ENCODE measurements at regions of chr6 and their contacts with region 1.

Region 1: GRCh38 chr6:26183581-26184366 is 96.5 kb downstream of the HFE start:
- DNase-seq: peak; percentile 72 to 81 (median 79)
- H3K4me3 ChIP-seq: peak overlapping the region; percentile 2 to 69
- H3K4me3 Mint-ChIP-seq: peak overlapping the region; percentile 90 to 100 (median 96)
- H3K27ac ChIP-seq: peak overlapping the region; percentile 67
- H3K27ac Mint-ChIP-seq: peak overlapping the region; percentile 78 to 99 (median 95)
- H3K4me1 ChIP-seq: peaks cover 45% of the 10 kb centered on the region
- H3K4me1 Mint-ChIP-seq: peaks cover 29 to 54% (median 37%) of the 10 kb centered on the region in 4 donors
- H3K27me3 ChIP-seq: no peaks in the 10 kb centered on the region
- H3K27me3 Mint-ChIP-seq: no peaks in the 10 kb centered on the region

Region 2: GRCh38 chr6:26054857-26055669 is 128.7 kb before region 1 on chr6:
- CTCF ChIA-PET with region 1: interaction called, 3 read pairs
- POLR2A ChIA-PET with region 1: interaction called, 15 read pairs
- intact Hi-C with region 1: no loop called
- DNase-seq: peak; percentile 89 to 96 (median 91)
- H3K4me3 ChIP-seq: peak overlapping the region; percentile 67 to 78
- H3K4me3 Mint-ChIP-seq: peak overlapping the region; percentile 93 to 96 (median 94)
- H3K27ac ChIP-seq: peak overlapping the region; percentile 84
- H3K27ac Mint-ChIP-seq: peak overlapping the region; percentile 91 to 98 (median 98)
- H3K4me1 ChIP-seq: peaks cover 24% of the 10 kb centered on the region
- H3K4me1 Mint-ChIP-seq: peaks cover 7 to 34% (median 15%) of the 10 kb centered on the region in 4 donors
- H3K27me3 ChIP-seq: no peaks in the 10 kb centered on the region
- H3K27me3 Mint-ChIP-seq: no peaks in the 10 kb centered on the region

Region 3: DNA sequence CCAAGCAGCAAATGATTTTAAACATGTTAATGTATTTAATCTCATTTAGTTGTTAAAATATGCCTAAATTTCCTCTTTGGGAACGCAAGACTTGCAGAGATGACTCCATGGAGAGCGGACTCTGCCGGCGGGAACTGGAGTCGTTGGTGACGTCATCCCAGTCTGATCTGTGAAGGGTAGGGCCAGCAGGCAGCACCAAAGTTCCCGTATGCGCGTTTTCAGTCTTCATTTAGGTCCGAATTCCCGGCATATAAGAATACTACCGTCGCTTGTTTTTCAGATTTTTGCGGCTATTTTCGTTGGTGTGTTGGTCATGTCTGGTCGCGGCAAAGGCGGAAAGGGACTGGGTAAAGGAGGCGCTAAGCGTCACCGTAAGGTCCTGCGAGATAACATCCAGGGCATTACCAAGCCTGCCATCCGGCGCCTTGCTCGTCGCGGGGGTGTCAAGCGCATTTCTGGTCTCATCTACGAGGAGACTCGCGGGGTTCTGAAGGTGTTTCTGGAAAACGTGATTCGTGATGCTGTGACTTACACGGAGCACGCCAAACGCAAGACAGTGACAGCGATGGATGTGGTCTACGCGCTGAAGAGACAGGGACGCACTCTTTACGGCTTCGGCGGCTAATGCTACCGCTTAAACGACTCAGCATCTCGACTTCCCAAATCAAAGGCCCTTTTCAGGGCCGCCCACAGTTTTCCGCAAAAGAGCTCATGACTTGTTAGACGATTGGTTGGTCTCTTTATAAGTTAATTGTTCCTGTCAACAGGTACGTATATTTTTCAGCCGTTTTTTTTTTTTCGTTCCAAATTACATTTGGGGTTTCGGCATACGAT is 20.8 kb after region 1 on chr6:
- CTCF ChIA-PET with region 1: interaction called, 54 read pairs
- POLR2A ChIA-PET with region 1: interaction called, 2,476 read pairs
- intact Hi-C with region 1: no loop called
- DNase-seq: peak; percentile 85 to 95 (median 89)
- H3K4me3 ChIP-seq: peak overlapping the region; percentile 48 to 87
- H3K4me3 Mint-ChIP-seq: no peak overlapping the region
- H3K27ac ChIP-seq: peak overlapping the region; percentile 82
- H3K27ac Mint-ChIP-seq: no peak overlapping the region
- H3K4me1 ChIP-seq: peaks cover 39% of the 10 kb centered on the region
- H3K4me1 Mint-ChIP-seq: peaks cover 8 to 26% (median 13%) of the 10 kb centered on the region in 4 donors
- H3K27me3 ChIP-seq: no peaks in the 10 kb centered on the region
- H3K27me3 Mint-ChIP-seq: peaks cover 0 to 3% of the 10 kb centered on the region in 2 donors

Region 4: GRCh38 chr6:26223650-26224546 is 40.1 kb after region 1 on chr6:
- CTCF ChIA-PET with region 1: interaction called, 5 read pairs
- POLR2A ChIA-PET with region 1: interaction called, 1,953 read pairs
- intact Hi-C with region 1: no loop called
- DNase-seq: peak; percentile 74 to 87 (median 84)
- H3K4me3 ChIP-seq: peak overlapping the region; percentile 45 to 82
- H3K4me3 Mint-ChIP-seq: no peak overlapping the region
- H3K27ac ChIP-seq: peak overlapping the region; percentile 69
- H3K27ac Mint-ChIP-seq: no peak overlapping the region
- H3K4me1 ChIP-seq: peaks cover 21% of the 10 kb centered on the region
- H3K4me1 Mint-ChIP-seq: peaks cover 6 to 8% (median 7%) of the 10 kb centered on the region in 4 donors
- H3K27me3 ChIP-seq: no peaks in the 10 kb centered on the region
- H3K27me3 Mint-ChIP-seq: no peaks in the 10 kb centered on the region

Region 5: DNA sequence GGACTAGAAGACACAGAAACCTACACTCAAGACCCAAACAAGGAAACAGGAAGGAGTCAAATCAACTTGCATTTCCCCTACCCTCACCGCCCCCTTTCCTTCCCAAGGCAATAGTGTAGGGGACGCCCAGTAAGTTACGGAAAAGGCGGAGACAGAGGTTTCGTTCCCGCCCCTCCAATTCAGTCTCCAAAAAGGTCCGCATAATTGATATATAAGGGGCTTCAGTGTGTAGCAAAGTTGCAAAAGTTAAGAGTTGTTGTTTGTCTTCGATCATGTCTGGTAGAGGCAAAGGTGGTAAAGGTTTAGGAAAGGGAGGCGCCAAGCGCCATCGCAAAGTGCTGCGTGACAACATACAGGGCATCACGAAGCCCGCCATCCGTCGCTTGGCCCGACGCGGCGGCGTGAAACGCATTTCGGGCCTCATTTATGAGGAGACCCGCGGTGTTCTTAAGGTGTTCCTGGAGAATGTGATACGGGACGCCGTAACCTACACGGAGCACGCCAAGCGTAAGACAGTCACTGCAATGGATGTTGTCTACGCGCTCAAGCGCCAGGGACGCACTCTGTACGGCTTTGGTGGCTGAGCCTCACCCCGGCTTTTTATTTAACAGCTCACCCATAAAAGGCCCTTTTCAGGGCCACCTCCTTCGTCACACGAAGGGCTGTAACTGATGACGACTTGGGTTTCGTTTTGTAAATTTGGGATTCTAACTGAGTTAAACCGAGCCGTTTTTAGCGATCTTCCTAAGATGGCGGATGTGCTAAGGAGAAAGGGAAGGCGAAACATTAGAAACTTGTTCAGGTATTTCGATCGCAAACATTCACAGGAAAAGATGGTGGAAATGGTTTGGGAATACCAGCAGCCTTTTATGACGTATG is 56.6 kb after region 1 on chr6:
- CTCF ChIA-PET with region 1: no interaction called
- POLR2A ChIA-PET with region 1: interaction called, 94 read pairs
- intact Hi-C with region 1: loop called (anchors 2 kb)
- DNase-seq: peak; percentile 79 to 86 (median 82)
- H3K4me3 ChIP-seq: peak overlapping the region; percentile 66 to 67
- H3K4me3 Mint-ChIP-seq: peak overlapping the region; percentile 80 to 93 (median 87)
- H3K27ac ChIP-seq: peak overlapping the region; percentile 81
- H3K27ac Mint-ChIP-seq: peak overlapping the region; percentile 89 to 99 (median 95)
- H3K4me1 ChIP-seq: peaks cover 11% of the 10 kb centered on the region
- H3K4me1 Mint-ChIP-seq: peaks cover 9 to 29% (median 15%) of the 10 kb centered on the region in 4 donors
- H3K27me3 ChIP-seq: no peaks in the 10 kb centered on the region
- H3K27me3 Mint-ChIP-seq: no peaks in the 10 kb centered on the region

Region 6: GRCh38 chr6:26329763-26330511 is 146.2 kb after region 1 on chr6:
- CTCF ChIA-PET with region 1: no interaction called
- POLR2A ChIA-PET with region 1: interaction called, 4 read pairs
- intact Hi-C with region 1: loop called (anchors 5 kb)
- DNase-seq: peak; percentile 51 to 66 (median 62)
- H3K4me3 ChIP-seq: no peak overlapping the region
- H3K4me3 Mint-ChIP-seq: peak overlapping the region; percentile 63 to 86 (median 82)
- H3K27ac ChIP-seq: no peak overlapping the region
- H3K27ac Mint-ChIP-seq: peak overlapping the region; percentile 42 to 98 (median 93)
- H3K4me1 ChIP-seq: peaks cover 32% of the 10 kb centered on the region
- H3K4me1 Mint-ChIP-seq: peaks cover 29 to 43% (median 32%) of the 10 kb centered on the region in 4 donors
- H3K27me3 ChIP-seq: peaks cover 7% of the 10 kb centered on the region
- H3K27me3 Mint-ChIP-seq: peaks cover 15 to 38% of the 10 kb centered on the region in 2 donors

Measured in CD4-positive, alpha-beta memory T cell (primary cell).